ENCODE measurements at regions of chr1 and their contacts with region 1.

Region 1: DNA sequence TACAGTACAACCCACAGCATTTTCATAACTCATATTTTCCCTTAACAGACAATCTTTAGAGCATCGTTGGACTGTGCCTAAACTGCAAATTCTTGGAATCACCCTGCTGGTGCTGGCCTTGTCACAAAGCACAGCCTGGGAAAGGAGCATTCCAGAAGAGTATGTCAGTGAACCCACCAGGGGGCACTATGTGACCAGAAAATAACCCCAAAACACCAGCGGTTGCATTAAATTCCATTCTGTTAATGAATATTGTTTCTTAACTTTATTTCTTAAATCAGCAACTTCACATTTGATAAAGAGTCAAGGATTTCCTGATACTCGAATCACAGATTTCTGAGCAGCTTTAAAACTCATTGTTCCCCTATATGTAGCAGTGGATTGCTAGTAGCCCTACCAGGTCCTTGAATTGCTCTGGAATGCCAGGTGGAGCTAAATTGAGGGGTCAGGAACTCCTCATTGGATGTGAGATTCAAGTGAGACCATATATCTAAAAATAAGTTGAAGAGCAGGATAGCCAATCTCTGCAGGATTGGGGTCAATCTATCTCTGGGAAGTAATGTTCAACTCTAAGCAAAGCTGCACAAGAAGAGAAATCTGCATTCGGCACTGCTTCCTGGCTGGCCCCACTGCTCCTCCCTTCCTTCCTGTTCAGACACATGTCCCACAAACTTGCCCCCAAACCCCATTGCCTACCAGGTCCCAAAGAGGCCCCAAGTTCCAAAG is 12.7 kb upstream of the RAB4A start:
- DNase-seq: peak; percentile 77
- H3K4me3 ChIP-seq: no peak overlapping the region
- H3K27ac ChIP-seq: no peak overlapping the region
- H3K4me1 ChIP-seq: no peaks in the 10 kb centered on the region
- H3K27me3 ChIP-seq: no peaks in the 10 kb centered on the region
- CTCF ChIP-seq: peak; percentile 55 to 82 (median 72)
- EP300 ChIP-seq: no peak
- POLR2A ChIP-seq: no peak

Region 2: DNA sequence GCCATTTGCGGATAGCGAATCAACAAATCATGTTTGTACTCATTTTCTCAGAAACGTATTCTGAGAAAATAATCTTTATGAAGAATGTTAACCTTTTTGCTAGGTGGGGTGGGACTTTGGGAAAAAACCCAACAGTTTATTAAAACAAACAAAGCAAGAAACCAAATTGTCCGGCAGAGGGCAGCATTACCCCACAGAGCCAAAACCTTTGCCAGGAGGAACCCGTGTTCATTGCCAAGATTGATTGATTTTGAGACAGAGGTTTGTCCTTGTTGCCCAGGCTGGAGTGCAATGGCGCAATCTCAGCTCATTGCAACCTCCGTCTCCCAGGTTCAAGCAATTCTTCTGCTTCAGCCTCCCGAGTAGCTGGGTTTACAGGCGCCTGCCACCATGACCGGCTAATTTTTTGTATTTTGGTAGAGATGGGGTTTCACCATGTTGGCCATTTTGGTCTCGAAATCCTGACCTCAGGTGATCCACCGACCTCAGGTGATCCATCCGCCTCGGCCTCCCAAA is 593.7 kb before region 1 on chr1:
- intact Hi-C with region 1: loop called (anchors 2 kb)
- DNase-seq: peak; percentile 84
- H3K4me3 ChIP-seq: no peak overlapping the region
- H3K27ac ChIP-seq: no peak overlapping the region
- H3K4me1 ChIP-seq: no peaks in the 10 kb centered on the region
- H3K27me3 ChIP-seq: peaks cover 0 to 3% (median 0%) of the 10 kb centered on the region in 3 donors
- CTCF ChIP-seq: peak; percentile 52 to 89 (median 74)
- EP300 ChIP-seq: no peak
- POLR2A ChIP-seq: no peak

Region 3: DNA sequence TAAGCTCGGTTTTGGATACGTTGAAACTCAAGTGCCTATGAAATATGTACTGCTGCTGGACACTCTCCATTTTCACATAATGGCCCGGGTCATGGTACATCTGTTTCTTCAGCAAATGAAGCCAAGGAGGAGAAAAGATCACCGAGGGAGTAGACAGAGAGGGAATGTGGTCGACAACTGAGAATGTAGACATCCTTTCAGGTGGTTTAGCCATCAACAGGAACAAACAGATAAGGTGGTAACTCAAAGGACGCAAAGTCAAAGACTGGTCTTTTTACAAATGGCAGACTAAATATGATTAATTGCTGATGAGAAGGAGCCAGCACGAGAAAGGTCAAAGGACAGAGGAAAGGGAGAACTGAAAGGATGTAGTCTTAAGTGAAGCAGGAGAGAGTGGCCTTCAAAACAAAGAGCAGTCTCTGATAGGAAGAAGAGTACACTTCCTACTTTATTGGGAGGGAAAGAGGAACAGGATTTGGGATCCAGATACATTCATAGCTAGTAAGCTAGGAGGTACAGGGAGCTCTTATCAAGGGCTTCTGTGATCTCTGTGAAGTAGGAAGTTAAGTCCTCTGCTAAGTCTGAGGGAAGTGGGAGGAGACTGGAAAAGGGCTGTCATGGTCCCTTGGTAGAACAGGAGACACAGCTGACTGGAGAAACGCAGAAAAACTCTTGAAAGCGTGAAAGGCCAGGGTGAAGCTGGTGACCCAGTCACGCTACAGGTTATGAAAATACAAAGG is 221.6 kb after region 1 on chr1:
- intact Hi-C with region 1: loop called (anchors 1 kb)
- DNase-seq: no peak
- H3K4me3 ChIP-seq: no peak overlapping the region
- H3K27ac ChIP-seq: no peak overlapping the region
- H3K4me1 ChIP-seq: peaks cover 0 to 8% (median 4%) of the 10 kb centered on the region in 4 donors
- H3K27me3 ChIP-seq: no peaks in the 10 kb centered on the region
- CTCF ChIP-seq: no peak
- EP300 ChIP-seq: no peak
- POLR2A ChIP-seq: no peak

Region 4: GRCh38 chr1:229514578-229515275 is 256.5 kb after region 1 on chr1:
- intact Hi-C with region 1: loop called (anchors 10 kb)
- DNase-seq: peak; percentile 73
- H3K4me3 ChIP-seq: no peak overlapping the region
- H3K27ac ChIP-seq: no peak overlapping the region
- H3K4me1 ChIP-seq: peaks cover 0 to 3% (median 0%) of the 10 kb centered on the region in 4 donors
- H3K27me3 ChIP-seq: no peaks in the 10 kb centered on the region
- CTCF ChIP-seq: peak; percentile 38 to 74 (median 54)
- EP300 ChIP-seq: no peak
- POLR2A ChIP-seq: no peak

Measured in sigmoid colon (tissue), 7 donors.